CD8-positive, alpha-beta memory T cell (primary cell): ENCODE measurements at regions of chr14 and their contacts with region 1.

Region 1: GRCh38 chr14:101721951-101722661 is 39.4 kb upstream of the PPP2R5C start:
- DNase-seq: peak; percentile 70 to 93 (median 89)
- H3K4me3 ChIP-seq: peak overlapping the region; percentile 42
- H3K4me3 Mint-ChIP-seq: peak overlapping the region; percentile 64 to 87 (median 78)
- H3K27ac ChIP-seq: peak overlapping the region; percentile 88
- H3K27ac Mint-ChIP-seq: peak overlapping the region; percentile 95 to 99 (median 97)
- H3K4me1 ChIP-seq: peaks cover 56% of the 10 kb centered on the region
- H3K4me1 Mint-ChIP-seq: peaks cover 52 to 79% (median 77%) of the 10 kb centered on the region in 3 donors
- H3K27me3 ChIP-seq: no peaks in the 10 kb centered on the region
- H3K27me3 Mint-ChIP-seq: peaks cover 0 to 2% of the 10 kb centered on the region in 2 donors

Region 2: GRCh38 chr14:101761032-101761880 is 39.1 kb after region 1 on chr14 and contains the start of gene PPP2R5C:
- CTCF ChIA-PET with region 1: interaction called, 9 read pairs
- POLR2A ChIA-PET with region 1: interaction called, 19 read pairs
- DNase-seq: peak; percentile 85 to 93 (median 87)
- H3K4me3 ChIP-seq: peak within 1 kb of the TSS; percentile 93
- H3K4me3 Mint-ChIP-seq: peak within 1 kb of the TSS; percentile 92 to 100 (median 97)
- H3K27ac ChIP-seq: peak within 1 kb of the TSS; percentile 75
- H3K27ac Mint-ChIP-seq: peak within 1 kb of the TSS; percentile 87 to 98 (median 96)
- H3K4me1 ChIP-seq: peaks cover 34% of the 10 kb centered on the region
- H3K4me1 Mint-ChIP-seq: peaks cover 38 to 64% (median 44%) of the 10 kb centered on the region in 3 donors
- H3K27me3 ChIP-seq: no peaks in the 10 kb centered on the region
- H3K27me3 Mint-ChIP-seq: peaks cover 0 to 4% of the 10 kb centered on the region in 2 donors
- total RNA-seq, gene PPP2R5C: 278 to 307 TPM

Region 3: DNA sequence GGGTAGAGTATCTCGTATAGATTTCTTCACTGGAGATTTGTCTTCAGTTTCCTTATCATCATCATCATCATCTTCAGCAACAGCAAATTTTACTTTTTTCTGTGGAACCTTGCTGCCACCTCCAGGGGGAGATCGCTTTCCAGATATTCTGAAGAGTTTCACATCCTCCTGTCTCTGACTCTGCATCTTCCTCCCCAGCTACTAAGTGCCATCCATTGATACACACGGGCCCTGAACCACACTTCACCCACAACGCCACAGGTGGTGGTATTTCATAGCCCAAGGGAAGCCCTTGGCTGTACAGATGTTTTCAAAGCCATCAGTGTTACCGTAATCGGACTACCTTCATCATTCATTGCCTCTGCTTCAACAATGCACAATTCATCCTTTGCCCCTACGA is 121.6 kb after region 1 on chr14:
- CTCF ChIA-PET with region 1: no interaction called
- POLR2A ChIA-PET with region 1: no interaction called
- DNase-seq: peak; percentile 48 to 69 (median 57)
- H3K4me3 ChIP-seq: no peak overlapping the region
- H3K4me3 Mint-ChIP-seq: peak overlapping the region; percentile 0 to 84 (median 54)
- H3K27ac ChIP-seq: no peak overlapping the region
- H3K27ac Mint-ChIP-seq: peak overlapping the region; percentile 50 to 96 (median 85)
- H3K4me1 ChIP-seq: peaks cover 88% of the 10 kb centered on the region
- H3K4me1 Mint-ChIP-seq: peaks cover 81 to 99% (median 93%) of the 10 kb centered on the region in 3 donors
- H3K27me3 ChIP-seq: no peaks in the 10 kb centered on the region
- H3K27me3 Mint-ChIP-seq: peaks cover 0 to 2% of the 10 kb centered on the region in 2 donors

Region 4: GRCh38 chr14:101933209-101933608 is 211.1 kb after region 1 on chr14:
- CTCF ChIA-PET with region 1: no interaction called
- POLR2A ChIA-PET with region 1: interaction called, 10 read pairs
- DNase-seq: no peak
- H3K4me3 ChIP-seq: no peak overlapping the region
- H3K4me3 Mint-ChIP-seq: no peak overlapping the region
- H3K27ac ChIP-seq: no peak overlapping the region
- H3K27ac Mint-ChIP-seq: peak overlapping the region in 2 of 8 donors; percentile 19 to 42
- H3K4me1 ChIP-seq: no peaks in the 10 kb centered on the region
- H3K4me1 Mint-ChIP-seq: peaks cover 0 to under 1% (median 0%) of the 10 kb centered on the region in 3 donors
- H3K27me3 ChIP-seq: no peaks in the 10 kb centered on the region
- H3K27me3 Mint-ChIP-seq: no peaks in the 10 kb centered on the region